Activated T-helper 2 cell treated with anti-CD3 and anti-CD28 coated beads, Interferon-gamma antibody, Interleukin-2, Interleukin-4, amounts not matched to agents 10 μg/mL and 5 μg/mL and 100 μg/mL, durations not matched to agents 14 hours and 24 hours and 36 hours (primary cell): ENCODE measurements at regions of chr4 and their contacts with region 1.

Region 1: DNA sequence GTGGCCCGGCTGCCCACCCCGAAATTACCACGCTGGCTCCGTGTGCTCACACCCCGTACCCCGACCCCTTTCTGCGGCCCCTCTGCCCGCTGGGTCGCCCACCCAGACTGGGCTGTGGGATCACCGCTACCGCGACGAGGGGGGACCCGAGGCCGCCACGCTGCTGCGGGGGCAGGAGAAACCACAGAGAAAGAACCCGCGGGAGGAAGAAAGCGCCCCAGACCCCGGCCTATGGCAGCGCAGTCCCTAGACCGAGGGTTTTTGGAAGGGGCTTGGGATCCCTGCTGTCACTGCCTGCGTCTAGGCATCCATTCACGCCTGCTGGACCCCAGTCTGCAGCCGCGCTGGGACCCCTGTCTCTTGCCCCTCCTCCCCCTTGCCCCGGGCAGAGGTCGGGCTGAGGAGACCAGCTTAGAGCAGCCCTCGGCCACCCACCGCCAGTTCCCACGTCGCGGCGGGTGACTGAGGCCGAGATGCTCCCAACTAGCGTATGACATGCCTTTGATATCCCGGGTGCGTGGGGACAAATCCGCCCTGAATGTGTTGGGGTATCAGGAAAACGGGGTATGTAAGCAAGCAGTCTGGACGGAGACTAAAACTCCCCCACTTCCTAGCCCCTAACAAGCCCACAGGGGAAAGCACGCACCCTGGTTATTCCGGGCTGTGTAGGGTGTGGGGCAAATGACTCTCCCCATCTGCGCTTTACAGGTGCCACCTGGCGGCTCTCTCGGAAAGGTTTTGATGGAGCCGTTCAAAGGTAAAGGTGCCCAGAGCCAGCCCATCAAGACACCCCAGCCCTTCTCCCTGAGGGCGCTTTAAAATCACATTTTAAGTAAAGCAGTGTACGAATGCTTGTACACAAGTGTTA is 862 bp upstream of the INPP4B start:
- DNase-seq: peak; percentile 62
- H3K4me3 Mint-ChIP-seq: peak overlapping the region; percentile 86
- H3K27ac Mint-ChIP-seq: peak overlapping the region; percentile 76
- H3K4me1 Mint-ChIP-seq: peaks cover 26% of the 10 kb centered on the region
- H3K27me3 Mint-ChIP-seq: peaks cover 36% of the 10 kb centered on the region

Region 2: DNA sequence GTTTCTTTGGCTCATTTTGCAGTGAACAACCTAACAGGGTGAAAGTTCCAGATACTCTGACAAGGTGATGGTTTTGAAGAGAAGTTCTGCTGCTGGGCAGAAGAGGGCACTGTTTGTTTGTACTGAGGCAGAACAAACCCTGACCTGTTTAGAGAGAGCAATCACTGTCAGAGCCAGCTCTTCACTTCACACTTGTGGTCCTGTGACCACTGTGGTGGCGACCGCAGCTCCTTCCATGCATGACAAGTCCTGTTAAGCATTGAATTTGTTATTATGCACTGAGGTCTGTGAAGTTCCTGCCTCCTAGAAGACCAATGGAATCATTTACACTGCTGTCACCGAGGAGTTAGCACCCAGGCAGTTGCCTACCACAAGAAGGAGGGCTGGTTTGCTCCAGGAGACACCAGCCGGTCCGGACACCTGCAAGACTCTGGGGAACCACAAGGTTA is 1539.7 kb before region 1 on chr4:
- intact Hi-C with region 1: loop called (anchors 2 kb)
- DNase-seq: peak; percentile 30
- H3K4me3 Mint-ChIP-seq: no peak overlapping the region
- H3K27ac Mint-ChIP-seq: no peak overlapping the region
- H3K4me1 Mint-ChIP-seq: peaks cover 6% of the 10 kb centered on the region
- H3K27me3 Mint-ChIP-seq: peaks cover 8% of the 10 kb centered on the region

Region 3: GRCh38 chr4:141702472-141703182 is 1144.3 kb before region 1 on chr4:
- intact Hi-C with region 1: loop called (anchors 2 kb)
- DNase-seq: no peak
- H3K4me3 Mint-ChIP-seq: no peak overlapping the region
- H3K27ac Mint-ChIP-seq: no peak overlapping the region
- H3K4me1 Mint-ChIP-seq: peaks cover 3% of the 10 kb centered on the region
- H3K27me3 Mint-ChIP-seq: no peaks in the 10 kb centered on the region

Region 4: DNA sequence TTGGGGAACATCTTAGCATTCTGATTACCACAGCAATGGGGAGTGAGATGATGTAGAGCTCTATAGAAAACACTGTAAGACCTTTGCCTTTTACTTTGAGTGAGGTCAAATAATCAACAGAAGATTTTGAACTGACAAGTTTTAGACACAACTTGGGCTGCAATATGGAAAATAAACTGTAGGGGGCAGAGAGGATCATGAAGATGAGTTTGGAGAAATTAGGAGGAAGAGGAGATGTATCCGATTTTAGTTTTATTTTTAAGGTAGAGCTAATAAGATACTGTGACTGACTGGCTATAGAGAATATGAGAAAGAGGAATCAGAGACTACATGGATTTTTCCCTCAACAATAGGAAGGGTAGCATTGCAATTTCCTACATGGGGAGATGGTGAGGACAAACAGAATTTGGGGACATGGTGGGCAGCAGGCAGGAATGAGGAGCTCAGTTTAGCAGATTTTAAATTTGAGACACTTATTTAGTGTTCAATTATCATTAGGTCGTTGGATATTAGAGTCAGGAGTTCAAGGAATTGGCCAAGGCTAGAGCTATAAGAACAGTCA is 564.0 kb before region 1 on chr4:
- intact Hi-C with region 1: loop called (anchors 2 kb)
- DNase-seq: no peak
- H3K4me3 Mint-ChIP-seq: no peak overlapping the region
- H3K27ac Mint-ChIP-seq: no peak overlapping the region
- H3K4me1 Mint-ChIP-seq: peaks cover 15% of the 10 kb centered on the region
- H3K27me3 Mint-ChIP-seq: no peaks in the 10 kb centered on the region

Region 5: GRCh38 chr4:142549726-142550463 is 297.1 kb before region 1 on chr4:
- intact Hi-C with region 1: loop called (anchors 5 kb)
- DNase-seq: no peak
- H3K4me3 Mint-ChIP-seq: no peak overlapping the region
- H3K27ac Mint-ChIP-seq: peak overlapping the region; percentile 68
- H3K4me1 Mint-ChIP-seq: peaks cover 59% of the 10 kb centered on the region
- H3K27me3 Mint-ChIP-seq: no peaks in the 10 kb centered on the region

Region 6: GRCh38 chr4:142817442-142817841 is 29.5 kb before region 1 on chr4:
- intact Hi-C with region 1: loop called (anchors 1 kb)
- DNase-seq: peak; percentile 26
- H3K4me3 Mint-ChIP-seq: no peak overlapping the region
- H3K27ac Mint-ChIP-seq: peak overlapping the region; percentile 78
- H3K4me1 Mint-ChIP-seq: peaks cover 23% of the 10 kb centered on the region
- H3K27me3 Mint-ChIP-seq: no peaks in the 10 kb centered on the region

Region 7: GRCh38 chr4:142883040-142883832 is 36.3 kb after region 1 on chr4:
- intact Hi-C with region 1: no loop called
- DNase-seq: no peak
- H3K4me3 Mint-ChIP-seq: no peak overlapping the region
- H3K27ac Mint-ChIP-seq: no peak overlapping the region
- H3K4me1 Mint-ChIP-seq: no peaks in the 10 kb centered on the region
- H3K27me3 Mint-ChIP-seq: peaks cover 17% of the 10 kb centered on the region

Region 8: DNA sequence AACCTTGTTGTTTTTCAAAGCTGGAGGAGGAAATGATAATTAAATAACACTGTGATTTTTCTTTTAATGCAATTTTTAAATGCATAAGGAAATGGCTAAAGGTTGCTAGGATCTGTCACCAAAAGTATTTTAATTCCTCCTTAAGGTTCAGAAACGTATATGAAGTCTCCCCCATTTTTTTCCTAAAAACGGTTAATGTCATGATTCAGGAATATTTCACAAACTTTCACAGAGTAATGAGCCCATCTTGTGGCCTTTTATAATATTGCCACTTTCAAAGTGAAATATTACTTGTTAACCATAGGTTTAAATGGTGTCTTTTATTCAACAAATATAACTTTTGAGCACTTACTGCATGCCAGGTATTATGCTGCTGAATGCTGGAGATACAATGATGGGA is 238.3 kb after region 1 on chr4:
- intact Hi-C with region 1: no loop called
- DNase-seq: no peak
- H3K4me3 Mint-ChIP-seq: no peak overlapping the region
- H3K27ac Mint-ChIP-seq: no peak overlapping the region
- H3K4me1 Mint-ChIP-seq: no peaks in the 10 kb centered on the region
- H3K27me3 Mint-ChIP-seq: peaks cover 3% of the 10 kb centered on the region